ENCODE measurements at regions of chr18 and their contacts with region 1.

Region 1: DNA sequence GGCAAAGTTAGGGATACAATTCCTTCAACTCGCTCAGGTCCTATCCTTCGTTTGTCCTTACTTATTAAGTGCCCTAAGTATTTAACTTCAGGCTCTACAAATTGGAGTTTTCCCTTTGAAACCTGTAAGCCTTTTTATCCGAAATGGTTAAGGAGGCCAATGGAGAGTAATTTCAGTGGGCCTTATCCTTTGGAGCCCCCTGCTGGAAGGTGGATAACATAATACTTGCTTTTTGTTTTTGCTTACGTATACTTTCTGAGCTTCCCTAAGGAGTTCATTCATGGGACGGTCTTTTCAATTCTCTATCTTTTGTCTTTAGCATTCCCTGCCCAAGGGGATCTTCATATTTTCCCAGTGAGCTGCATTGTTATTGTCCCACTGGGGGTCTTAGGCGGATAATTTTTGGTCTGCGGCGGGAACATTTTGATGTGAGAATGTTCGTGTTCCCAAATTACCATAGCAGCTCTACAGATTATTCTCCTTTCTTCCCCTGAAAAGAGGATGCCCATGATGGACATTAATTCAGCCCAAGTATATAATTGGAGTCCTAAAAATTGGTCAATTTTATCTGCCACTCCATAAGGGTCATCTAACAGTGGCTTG is 34.4 kb upstream of the TRAPPC8 start:
- DNase-seq: peak; percentile 48
- H3K4me3 ChIP-seq: no peak overlapping the region
- H3K27ac ChIP-seq: no peak overlapping the region
- H3K4me1 ChIP-seq: peaks cover 3% of the 10 kb centered on the region
- H3K27me3 ChIP-seq: peaks cover 0 to 5% of the 10 kb centered on the region in 2 experiments
- CTCF ChIP-seq: peak; percentile 55 to 59
- POLR2A ChIP-seq: no peak

Region 2: DNA sequence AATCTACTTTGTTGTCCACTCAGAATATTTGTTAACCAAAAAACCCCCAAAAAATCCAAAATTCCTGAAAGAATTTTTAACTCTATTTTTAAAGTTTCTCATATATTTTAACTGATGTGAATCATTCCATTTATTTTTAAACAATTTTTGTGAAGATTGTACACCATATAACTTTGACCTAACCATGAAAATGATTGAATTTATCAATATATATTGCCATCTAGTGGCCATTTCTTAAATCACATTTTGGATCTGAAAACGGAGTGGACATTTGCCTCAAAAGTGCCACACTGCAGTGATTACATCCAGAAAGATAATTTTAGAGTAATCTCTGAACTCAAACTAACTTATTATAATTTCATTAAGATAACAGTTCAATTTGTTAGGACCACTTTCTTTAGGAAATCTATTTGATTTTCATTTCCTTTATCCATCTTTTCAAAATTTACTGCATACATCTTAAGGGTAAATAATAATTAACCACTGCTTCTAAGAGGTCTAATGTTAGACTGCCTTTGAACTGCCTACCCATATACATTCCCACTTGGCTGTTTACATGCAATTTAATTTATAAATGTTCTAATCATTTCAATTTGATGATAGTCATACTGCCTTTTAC is 1005.9 kb before region 1 on chr18:
- CTCF ChIA-PET with region 1: interaction called, 4 read pairs
- POLR2A ChIA-PET with region 1: no interaction called
- dilution Hi-C with region 1: no loop called
- intact Hi-C with region 1: loop called (anchors 5 kb)
- DNase-seq: peak; percentile 37
- H3K4me3 ChIP-seq: no peak overlapping the region
- H3K27ac ChIP-seq: no peak overlapping the region
- H3K4me1 ChIP-seq: no peaks in the 10 kb centered on the region
- H3K27me3 ChIP-seq: no peaks in the 10 kb centered on the region
- CTCF ChIP-seq: peak in 1 of 2 donors; percentile 31
- POLR2A ChIP-seq: no peak

Region 3: GRCh38 chr18:31741097-31741735 is 236.2 kb before region 1 on chr18:
- CTCF ChIA-PET with region 1: interaction called, 14 read pairs
- POLR2A ChIA-PET with region 1: no interaction called
- dilution Hi-C with region 1: no loop called
- intact Hi-C with region 1: loop called (anchors 1 kb)
- DNase-seq: peak; percentile 44
- H3K4me3 ChIP-seq: no peak overlapping the region
- H3K27ac ChIP-seq: no peak overlapping the region
- H3K4me1 ChIP-seq: no peaks in the 10 kb centered on the region
- H3K27me3 ChIP-seq: no peaks in the 10 kb centered on the region
- CTCF ChIP-seq: peak; percentile 60 to 66
- POLR2A ChIP-seq: no peak

Region 4: GRCh38 chr18:31990823-31991222 is 13.5 kb after region 1 on chr18:
- CTCF ChIA-PET with region 1: interaction called, 25 read pairs
- POLR2A ChIA-PET with region 1: no interaction called
- dilution Hi-C with region 1: no loop called
- intact Hi-C with region 1: no loop called
- DNase-seq: no peak
- H3K4me3 ChIP-seq: no peak overlapping the region
- H3K27ac ChIP-seq: no peak overlapping the region
- H3K4me1 ChIP-seq: no peaks in the 10 kb centered on the region
- H3K27me3 ChIP-seq: no peaks in the 10 kb centered on the region
- CTCF ChIP-seq: no peak
- POLR2A ChIP-seq: no peak

Region 5: DNA sequence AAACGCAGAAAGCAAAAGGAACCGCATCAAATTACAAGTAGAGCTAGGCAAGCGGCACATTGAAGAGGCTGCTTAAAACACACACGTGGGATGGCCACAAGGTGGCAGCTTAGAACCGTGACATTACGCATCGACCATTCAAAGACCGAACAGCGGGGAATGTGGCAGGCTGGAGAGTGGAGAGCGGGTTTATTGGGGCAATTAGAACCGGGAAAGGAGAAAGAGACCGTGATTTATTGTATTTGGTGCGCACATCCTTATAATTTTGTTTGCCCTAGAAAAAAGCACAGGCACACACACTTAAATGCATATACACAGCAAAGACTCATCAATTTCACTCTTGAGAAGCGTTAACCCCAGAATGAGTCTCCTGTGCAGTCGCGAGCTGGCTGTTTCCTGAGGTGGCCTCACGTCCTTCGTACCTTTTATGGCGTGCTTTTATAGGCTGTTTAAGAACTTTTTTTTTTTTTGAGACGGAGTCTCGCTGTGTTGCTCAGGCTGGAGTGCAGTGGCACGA is 180.8 kb after region 1 on chr18:
- CTCF ChIA-PET with region 1: no interaction called
- POLR2A ChIA-PET with region 1: no interaction called
- dilution Hi-C with region 1: no loop called
- intact Hi-C with region 1: no loop called
- DNase-seq: peak; percentile 83
- H3K4me3 ChIP-seq: no peak overlapping the region
- H3K27ac ChIP-seq: no peak overlapping the region
- H3K4me1 ChIP-seq: no peaks in the 10 kb centered on the region
- H3K27me3 ChIP-seq: peaks cover 0 to 4% of the 10 kb centered on the region in 2 experiments
- CTCF ChIP-seq: peak; percentile 78 to 85
- POLR2A ChIP-seq: no peak

Region 6: DNA sequence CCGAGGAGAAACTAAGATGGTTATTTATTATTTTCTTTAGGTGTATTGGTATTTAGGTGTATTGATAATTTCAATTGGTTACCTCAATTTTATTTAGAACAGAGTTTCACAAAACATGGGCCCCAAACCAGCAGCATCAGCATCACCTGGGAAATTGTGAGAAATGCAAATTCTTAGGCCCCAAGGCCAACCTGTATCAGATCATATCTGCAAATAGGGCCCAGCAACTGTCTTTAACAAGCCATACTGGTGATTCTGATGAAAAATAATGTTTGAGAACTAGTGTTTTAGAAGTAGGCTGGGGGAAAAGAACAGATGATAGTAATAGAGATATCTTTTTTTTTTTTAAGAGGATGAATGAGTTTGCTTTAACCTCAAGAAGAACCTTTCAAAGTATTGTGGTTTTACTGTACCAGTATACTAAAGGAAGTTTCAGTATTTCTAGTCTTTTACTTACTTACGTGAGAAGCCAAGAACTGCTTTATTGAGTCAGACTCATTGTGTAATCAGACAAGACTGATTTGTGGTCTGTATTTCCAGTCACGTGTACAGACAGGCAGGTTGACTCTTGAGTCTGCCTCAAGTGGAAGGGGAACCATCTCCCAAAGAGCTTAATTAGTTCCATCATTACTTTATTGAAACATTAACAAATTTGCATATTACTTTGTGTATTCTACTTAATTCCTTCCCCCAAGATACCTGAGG is 553.7 kb after region 1 on chr18:
- CTCF ChIA-PET with region 1: no interaction called
- POLR2A ChIA-PET with region 1: no interaction called
- dilution Hi-C with region 1: no loop called
- intact Hi-C with region 1: no loop called
- DNase-seq: no peak
- H3K4me3 ChIP-seq: no peak overlapping the region
- H3K27ac ChIP-seq: no peak overlapping the region
- H3K4me1 ChIP-seq: no peaks in the 10 kb centered on the region
- H3K27me3 ChIP-seq: no peaks in the 10 kb centered on the region
- CTCF ChIP-seq: no peak
- POLR2A ChIP-seq: no peak

Measured in endothelial cell of umbilical vein (primary cell).